Thyroid gland (tissue), 4 donors: ENCODE measurements at regions of chr1 and their contacts with region 1.

Region 1: DNA sequence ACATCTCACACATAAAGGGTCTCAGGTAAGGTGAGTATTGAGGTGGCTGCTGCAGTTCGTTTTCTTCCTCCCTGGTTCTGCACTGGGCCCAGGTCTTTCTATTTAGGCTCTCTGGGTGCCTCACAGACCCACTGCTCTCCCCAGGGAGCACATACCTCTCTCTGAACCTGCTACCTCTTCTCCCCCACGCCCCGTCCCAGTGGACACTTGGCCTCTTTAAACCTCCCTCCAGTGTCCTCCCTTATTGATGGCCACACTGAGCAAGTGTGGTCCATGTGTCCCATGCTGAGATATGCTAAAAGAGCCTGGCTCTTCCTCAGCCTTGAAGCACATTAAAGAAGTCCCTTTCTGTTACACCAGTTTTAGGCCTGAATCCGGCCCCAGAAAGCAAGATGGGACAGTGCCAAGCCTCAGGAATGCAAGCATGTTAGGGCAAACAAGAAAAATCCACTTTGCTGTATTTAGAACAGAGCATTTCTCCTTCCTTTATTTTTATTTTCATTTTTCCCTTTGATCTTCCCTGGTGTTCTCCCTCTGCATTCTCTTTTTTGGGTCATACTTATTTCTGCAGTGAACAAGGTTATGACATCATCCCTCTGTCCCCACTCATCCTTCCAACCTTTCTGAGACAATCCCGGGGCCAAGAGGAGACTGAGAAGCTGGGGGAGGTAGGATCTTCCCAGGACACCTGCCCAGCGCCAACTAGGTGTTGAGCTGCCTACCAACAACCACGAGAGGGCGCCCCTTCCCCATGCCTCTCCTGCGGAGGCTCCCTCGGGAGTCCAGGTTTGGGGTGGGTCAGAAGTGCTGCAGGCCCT is 5.0 kb upstream of the CHI3L2 start:
- DNase-seq: peak; percentile 79 to 82
- H3K4me3 ChIP-seq: no peak overlapping the region
- H3K27ac ChIP-seq: peak overlapping the region in 2 of 3 donors; percentile 15 to 21
- H3K4me1 ChIP-seq: peaks cover 25 to 32% of the 10 kb centered on the region in 2 donors
- H3K27me3 ChIP-seq: no peaks in the 10 kb centered on the region
- CTCF ChIP-seq: peak; percentile 68 to 96 (median 95)
- POLR2A ChIP-seq: no peak

Region 2: DNA sequence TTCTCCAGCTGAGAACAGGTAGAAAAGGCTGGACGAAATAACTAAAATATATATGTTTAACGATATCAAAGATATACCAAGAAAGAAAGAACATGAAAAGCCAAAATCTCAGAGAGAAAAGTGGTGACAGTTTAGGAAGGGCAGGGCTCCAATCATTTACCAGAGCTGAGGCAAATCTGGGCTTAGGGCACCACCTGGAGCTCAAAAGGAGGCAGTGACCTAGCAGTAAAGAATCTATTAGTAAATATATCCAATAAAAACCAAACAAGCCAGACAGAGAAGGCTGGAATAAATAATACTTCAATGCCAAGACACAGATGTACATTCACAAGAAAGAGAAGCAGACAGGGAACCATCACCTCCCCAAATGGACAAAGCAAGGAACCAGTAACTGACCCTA is 111.7 kb after region 1 on chr1:
- intact Hi-C with region 1: loop called (anchors 5 kb)
- DNase-seq: peak; percentile 59 to 66
- H3K4me3 ChIP-seq: no peak overlapping the region
- H3K27ac ChIP-seq: no peak overlapping the region
- H3K4me1 ChIP-seq: no peaks in the 10 kb centered on the region
- H3K27me3 ChIP-seq: no peaks in the 10 kb centered on the region
- CTCF ChIP-seq: peak; percentile 33 to 92 (median 82)
- POLR2A ChIP-seq: no peak

Region 3: GRCh38 chr1:111366256-111366655 is 143.7 kb after region 1 on chr1:
- intact Hi-C with region 1: no loop called
- DNase-seq: no peak
- H3K4me3 ChIP-seq: no peak overlapping the region
- H3K27ac ChIP-seq: no peak overlapping the region
- H3K4me1 ChIP-seq: no peaks in the 10 kb centered on the region
- H3K27me3 ChIP-seq: no peaks in the 10 kb centered on the region
- CTCF ChIP-seq: no peak
- POLR2A ChIP-seq: no peak

Region 4: DNA sequence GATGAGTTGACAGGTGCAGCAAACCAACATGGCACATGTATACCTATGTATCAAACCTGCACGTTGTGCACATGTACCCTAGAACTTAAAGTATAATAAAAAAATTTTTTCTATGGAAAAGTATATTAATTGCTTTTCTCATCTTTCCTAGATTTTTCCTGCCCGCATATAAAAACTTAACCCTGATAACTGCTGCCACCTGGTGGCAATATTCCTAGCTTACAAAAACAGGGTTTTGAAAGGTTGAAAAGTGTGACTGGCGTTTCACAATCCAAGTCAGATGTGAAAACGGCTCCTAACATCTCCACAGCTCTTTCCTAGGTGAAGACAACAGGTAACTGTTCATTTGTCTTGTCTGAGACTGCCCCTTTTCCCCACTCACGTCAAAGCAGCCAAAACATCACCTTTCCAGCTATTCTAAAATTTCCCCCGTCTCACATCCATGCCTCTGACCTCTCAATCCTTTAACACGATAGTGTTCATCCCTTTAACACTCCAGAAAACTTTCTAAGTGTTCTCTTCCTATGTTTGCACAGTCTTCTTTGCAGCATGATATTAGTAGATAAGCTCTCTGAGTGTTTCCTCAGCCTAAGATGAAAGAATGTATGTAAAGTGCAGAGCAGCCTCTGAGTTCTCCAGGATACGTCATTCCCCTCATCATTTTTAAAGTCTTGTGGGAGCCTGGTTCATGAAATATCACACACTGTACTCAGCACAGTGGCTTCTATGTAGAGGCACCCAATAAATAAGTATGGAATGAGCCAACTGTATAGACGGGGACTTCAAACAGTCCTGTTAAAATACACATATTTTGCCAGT is 177.5 kb after region 1 on chr1:
- intact Hi-C with region 1: loop called (anchors 5 kb)
- DNase-seq: peak; percentile 56
- H3K4me3 ChIP-seq: no peak overlapping the region
- H3K27ac ChIP-seq: no peak overlapping the region
- H3K4me1 ChIP-seq: no peaks in the 10 kb centered on the region
- H3K27me3 ChIP-seq: no peaks in the 10 kb centered on the region
- CTCF ChIP-seq: peak; percentile 9 to 68 (median 60)
- POLR2A ChIP-seq: no peak